ENCODE measurements at regions of chr2 and their contacts with region 1.

Region 1: GRCh38 chr2:229273723-229274338 is 2.7 kb upstream of the PID1 start:
- DNase-seq: no peak

Region 2: GRCh38 chr2:228699400-228699799 is 574.4 kb before region 1 on chr2:
- intact Hi-C with region 1: loop called (anchors 2 kb)
- DNase-seq: no peak

Region 3: GRCh38 chr2:229133155-229133772 is 140.6 kb before region 1 on chr2:
- intact Hi-C with region 1: loop called (anchors 5 kb)
- DNase-seq: no peak

Measured in cardiac septum (tissue), 1 donor.